ENCODE measurements at regions of chr17 and their contacts with region 1.

Region 1: DNA sequence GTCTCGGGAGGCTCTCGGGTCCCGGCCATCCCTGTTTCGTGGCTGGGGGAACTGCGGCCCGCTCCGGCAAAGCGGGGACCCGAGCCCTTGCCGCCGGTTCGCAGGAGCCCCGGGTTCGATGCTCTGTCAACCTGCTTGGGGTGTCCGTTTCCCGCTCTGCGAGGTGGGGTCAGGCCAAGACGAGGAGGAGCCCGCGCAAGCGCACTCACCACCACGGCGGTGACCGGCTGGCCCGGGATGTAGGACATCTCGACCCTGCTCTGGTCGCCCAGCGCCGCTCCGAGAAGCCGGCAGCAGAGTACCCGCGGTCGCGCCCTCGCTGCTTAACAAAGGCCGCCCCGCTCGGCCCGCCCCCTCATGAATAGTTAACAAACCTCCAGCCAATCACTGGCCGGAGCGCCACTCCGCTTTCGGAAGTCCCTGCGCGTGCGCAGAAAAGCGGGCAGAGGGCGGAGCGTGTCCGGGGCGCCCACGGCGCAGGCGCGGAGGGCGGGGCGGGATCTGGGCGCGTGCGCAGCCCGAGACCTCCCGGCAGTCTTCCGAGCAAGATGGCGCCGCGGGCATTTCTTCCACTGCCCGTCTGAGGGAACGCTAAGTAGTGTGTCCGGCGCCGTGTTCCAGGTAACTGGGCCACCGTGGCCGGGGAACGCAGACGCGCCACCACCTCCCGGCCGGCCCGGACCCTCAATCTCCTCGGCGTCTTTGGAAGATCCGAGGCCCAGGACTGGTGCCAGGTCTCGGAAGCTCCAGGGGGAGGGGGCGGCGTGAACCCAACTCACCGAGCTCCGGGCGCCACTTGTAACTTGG is at the starts of genes EMC6 and TAX1BP3:
- H3K4me3 ChIP-seq: peak within 1 kb of the TSS; percentile 90
- H3K27ac ChIP-seq: peak within 1 kb of the TSS; percentile 93
- H3K4me1 ChIP-seq: peaks cover 8% of the 10 kb centered on the region; the same call in 1 of the 2 replicates
- CTCF ChIP-seq: no peak

Region 2: GRCh38 chr17:3610523-3610922 is 58.0 kb before region 1 on chr17:
- CTCF ChIA-PET with region 1: no interaction called
- POLR2A ChIA-PET with region 1: no interaction called
- H3K4me3 ChIP-seq: no peak overlapping the region
- H3K27ac ChIP-seq: no peak overlapping the region
- H3K4me1 ChIP-seq: no peaks in the 10 kb centered on the region
- CTCF ChIP-seq: no peak

Region 3: GRCh38 chr17:3688027-3688553 is 19.6 kb after region 1 on chr17:
- CTCF ChIA-PET with region 1: no interaction called
- POLR2A ChIA-PET with region 1: no interaction called
- H3K4me3 ChIP-seq: no peak overlapping the region
- H3K27ac ChIP-seq: no peak overlapping the region
- H3K4me1 ChIP-seq: no peaks in the 10 kb centered on the region; the same call in 1 of the 2 replicates
- CTCF ChIP-seq: no peak

Region 4: GRCh38 chr17:3723556-3724369 is 55.3 kb after region 1 on chr17 and contains the start of gene HASPIN:
- CTCF ChIA-PET with region 1: no interaction called
- POLR2A ChIA-PET with region 1: interaction called, 20 read pairs
- H3K4me3 ChIP-seq: peak within 1 kb of the TSS; percentile 94
- H3K27ac ChIP-seq: peak within 1 kb of the TSS; percentile 78
- H3K4me1 ChIP-seq: peaks cover 6% of the 10 kb centered on the region
- CTCF ChIP-seq: peak; percentile 81